Dendritic cell treated with granulocyte-macrophage colony-stimulating factor and Interleukin-4, amounts not matched to agents 40 ng/mL and 50 ng/mL, for 4 days (primary cell): ENCODE measurements at regions of chr20 and their contacts with region 1.

Region 1: GRCh38 chr20:32779500-32780211 is 17.5 kb downstream of the DNMT3B start:
- H3K4me3 Mint-ChIP-seq: no peak overlapping the region
- H3K27ac Mint-ChIP-seq: no peak overlapping the region
- H3K4me1 Mint-ChIP-seq: peaks cover 5% of the 10 kb centered on the region
- H3K27me3 Mint-ChIP-seq: no peaks in the 10 kb centered on the region

Region 2: DNA sequence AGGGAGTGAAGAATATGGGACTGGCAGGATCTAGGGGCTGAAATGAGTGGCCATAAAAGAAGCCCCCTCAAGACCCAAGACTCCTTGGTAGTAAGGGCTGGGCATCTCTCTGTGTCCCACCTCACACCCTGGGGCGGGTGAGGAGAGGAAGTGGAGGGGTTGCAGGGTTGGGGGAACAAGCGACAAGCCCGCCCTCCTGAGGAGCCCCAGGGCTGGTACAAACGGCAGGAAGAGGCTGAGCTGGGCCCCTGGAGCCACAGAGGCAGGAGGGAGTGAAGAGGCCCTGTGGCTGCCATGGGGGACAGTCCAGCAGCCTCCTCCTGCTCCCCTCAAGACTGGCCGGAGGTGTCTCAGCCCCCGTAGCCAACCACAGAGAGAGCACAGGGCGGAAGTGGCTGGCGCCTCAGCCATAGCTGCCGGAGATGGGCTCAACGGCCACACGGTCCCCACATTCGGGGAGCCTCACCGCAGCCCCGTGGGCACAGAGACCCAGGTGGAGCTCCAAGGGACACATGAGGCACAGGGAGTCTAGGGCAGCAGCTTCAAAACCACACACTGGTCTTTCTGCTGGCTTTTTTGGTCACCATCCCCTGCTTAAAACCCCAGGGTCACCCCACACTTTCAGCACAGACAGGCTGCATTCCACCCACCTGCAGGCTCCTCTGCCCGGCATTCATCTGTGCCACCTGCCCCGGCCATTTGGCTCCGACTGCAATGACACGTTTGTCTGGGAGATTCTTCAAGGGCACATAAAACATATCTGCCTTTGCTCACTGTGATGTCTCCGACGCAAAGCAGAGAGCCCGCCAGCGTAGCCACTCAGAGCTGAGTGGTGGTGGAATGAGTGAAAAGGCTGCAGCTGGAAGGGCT is 106.4 kb before region 1 on chr20:
- intact Hi-C with region 1: loop called (anchors 2 kb)
- H3K4me3 Mint-ChIP-seq: peak overlapping the region; percentile 25
- H3K27ac Mint-ChIP-seq: peak overlapping the region; percentile 78
- H3K4me1 Mint-ChIP-seq: peaks cover 35% of the 10 kb centered on the region
- H3K27me3 Mint-ChIP-seq: peaks cover 3% of the 10 kb centered on the region